Heart left ventricle (tissue), 16 donors: ENCODE measurements at regions of chr1 and their contacts with region 1.

Region 1: DNA sequence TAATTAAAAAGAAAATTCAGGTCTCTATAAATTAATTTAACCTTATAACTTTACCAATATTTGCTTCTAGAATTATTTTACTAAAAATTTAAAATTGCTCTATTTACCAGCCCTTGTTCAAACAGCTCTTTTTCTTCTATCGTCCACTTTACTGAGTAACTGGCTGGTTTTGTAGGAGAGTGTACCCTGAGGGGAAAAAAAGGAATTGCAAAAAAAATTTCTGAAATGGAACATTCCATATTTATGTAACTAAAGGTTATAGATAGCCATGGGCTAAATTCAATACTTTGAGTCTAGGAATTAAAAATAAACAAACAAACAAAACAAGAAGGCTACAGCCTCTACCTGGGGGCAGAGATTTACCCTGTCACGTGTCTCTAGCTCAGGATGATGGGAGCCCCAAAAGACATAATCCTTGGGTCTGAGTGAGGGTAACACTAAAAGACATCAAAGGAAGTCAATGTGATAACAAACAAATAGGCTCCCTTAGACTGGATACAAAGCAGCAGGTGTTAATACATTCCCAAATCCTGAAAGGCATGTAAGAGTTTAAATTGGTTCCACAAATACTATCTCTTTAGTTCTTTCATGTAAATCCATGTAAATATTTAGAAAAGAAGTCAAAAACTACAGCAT is 10.8 kb downstream of the MYSM1 start:
- DNase-seq: no peak
- ATAC-seq: no peak
- H3K4me3 ChIP-seq: no peak overlapping the region
- H3K27ac ChIP-seq: no peak overlapping the region
- H3K4me1 ChIP-seq: peaks cover 0 to 16% (median 7%) of the 10 kb centered on the region in 12 donors
- H3K27me3 ChIP-seq: no peaks in the 10 kb centered on the region
- CTCF ChIP-seq: no peak
- POLR2A ChIP-seq: no peak

Region 2: GRCh38 chr1:58664881-58665280 is 24.2 kb before region 1 on chr1:
- intact Hi-C with region 1: loop called in 1 of 10 experiments (anchors 2 kb)
- DNase-seq: no peak
- ATAC-seq: peak in 2 of 4 donors; percentile 18 to 47
- H3K4me3 ChIP-seq: no peak overlapping the region
- H3K27ac ChIP-seq: peak overlapping the region in 1 of 12 donors; percentile 24
- H3K4me1 ChIP-seq: peaks cover 0 to 14% (median 11%) of the 10 kb centered on the region in 12 donors
- H3K27me3 ChIP-seq: no peaks in the 10 kb centered on the region
- CTCF ChIP-seq: no peak
- POLR2A ChIP-seq: no peak